ENCODE measurements at regions of chr11 and their contacts with region 1.

Region 1: GRCh38 chr11:1640076-1640946 is 10.7 kb downstream of the KRTAP5-5 start:
- DNase-seq: no peak
- H3K4me3 ChIP-seq: no peak overlapping the region
- H3K27ac ChIP-seq: no peak overlapping the region
- H3K4me1 ChIP-seq: peaks cover 11% of the 10 kb centered on the region
- H3K27me3 ChIP-seq: peaks cover 2 to 3% of the 10 kb centered on the region in 2 experiments
- CTCF ChIP-seq: peak; percentile 78 to 82
- POLR2A ChIP-seq: no peak

Region 2: GRCh38 chr11:1586699-1587098 is 53.6 kb before region 1 on chr11:
- CTCF ChIA-PET with region 1: interaction called, 3 read pairs
- POLR2A ChIA-PET with region 1: no interaction called
- dilution Hi-C with region 1: no loop called
- intact Hi-C with region 1: loop called (anchors 5 kb)
- DNase-seq: no peak
- H3K4me3 ChIP-seq: no peak overlapping the region
- H3K27ac ChIP-seq: no peak overlapping the region
- H3K4me1 ChIP-seq: peaks cover 7% of the 10 kb centered on the region
- H3K27me3 ChIP-seq: no peaks in the 10 kb centered on the region
- CTCF ChIP-seq: no peak
- POLR2A ChIP-seq: no peak

Region 3: GRCh38 chr11:1628506-1629325 is 11.6 kb before region 1 on chr11:
- CTCF ChIA-PET with region 1: interaction called, 14 read pairs
- POLR2A ChIA-PET with region 1: no interaction called
- dilution Hi-C with region 1: no loop called
- intact Hi-C with region 1: no loop called
- DNase-seq: peak; percentile 34
- H3K4me3 ChIP-seq: no peak overlapping the region
- H3K27ac ChIP-seq: no peak overlapping the region
- H3K4me1 ChIP-seq: no peaks in the 10 kb centered on the region
- H3K27me3 ChIP-seq: peaks cover 0 to 8% of the 10 kb centered on the region in 2 experiments
- CTCF ChIP-seq: peak; percentile 95 to 97
- POLR2A ChIP-seq: no peak

Region 4: DNA sequence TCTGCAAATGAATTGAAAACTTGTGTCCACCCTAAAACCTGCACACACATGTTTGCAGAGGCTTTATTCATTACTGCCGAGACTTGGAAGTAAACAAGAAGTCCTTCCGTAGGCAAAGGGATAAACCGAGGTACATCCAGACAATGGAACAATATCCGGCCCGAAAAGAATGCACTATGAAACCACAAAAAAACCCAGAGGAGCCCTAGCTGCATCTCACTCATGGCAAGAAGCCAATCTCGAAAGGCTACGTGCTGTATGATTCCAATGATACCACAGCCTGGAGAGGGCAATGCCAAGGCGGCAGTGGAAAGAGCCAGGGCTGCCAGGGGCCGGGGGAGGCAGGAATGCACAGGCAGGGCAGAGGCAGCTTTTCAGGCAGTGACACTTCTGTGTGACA is 303.7 kb after region 1 on chr11:
- CTCF ChIA-PET with region 1: no interaction called
- POLR2A ChIA-PET with region 1: no interaction called
- dilution Hi-C with region 1: no loop called
- intact Hi-C with region 1: no loop called
- DNase-seq: peak; percentile 24
- H3K4me3 ChIP-seq: no peak overlapping the region
- H3K27ac ChIP-seq: no peak overlapping the region
- H3K4me1 ChIP-seq: no peaks in the 10 kb centered on the region
- H3K27me3 ChIP-seq: no peaks in the 10 kb centered on the region
- CTCF ChIP-seq: no peak
- POLR2A ChIP-seq: no peak

Measured in endothelial cell of umbilical vein (primary cell).